ENCODE measurements at regions of chr10 and their contacts with region 1.

Region 1: GRCh38 chr10:52752801-52753445 is 19.7 kb downstream of the MBL2 start:
- DNase-seq: no peak
- H3K4me3 ChIP-seq: no peak overlapping the region
- H3K27ac ChIP-seq: no peak overlapping the region
- H3K4me1 ChIP-seq: no peaks in the 10 kb centered on the region
- H3K27me3 ChIP-seq: no peaks in the 10 kb centered on the region
- CTCF ChIP-seq: no peak
- EP300 ChIP-seq: no peak
- POLR2A ChIP-seq: no peak

Region 2: GRCh38 chr10:52779541-52780390 is 26.8 kb after region 1 on chr10:
- intact Hi-C with region 1: no loop called
- DNase-seq: peak in 2 of 5 donors; percentile 23 to 24
- H3K4me3 ChIP-seq: no peak overlapping the region
- H3K27ac ChIP-seq: no peak overlapping the region
- H3K4me1 ChIP-seq: no peaks in the 10 kb centered on the region
- H3K27me3 ChIP-seq: no peaks in the 10 kb centered on the region
- CTCF ChIP-seq: no peak
- EP300 ChIP-seq: no peak
- POLR2A ChIP-seq: no peak

Region 3: DNA sequence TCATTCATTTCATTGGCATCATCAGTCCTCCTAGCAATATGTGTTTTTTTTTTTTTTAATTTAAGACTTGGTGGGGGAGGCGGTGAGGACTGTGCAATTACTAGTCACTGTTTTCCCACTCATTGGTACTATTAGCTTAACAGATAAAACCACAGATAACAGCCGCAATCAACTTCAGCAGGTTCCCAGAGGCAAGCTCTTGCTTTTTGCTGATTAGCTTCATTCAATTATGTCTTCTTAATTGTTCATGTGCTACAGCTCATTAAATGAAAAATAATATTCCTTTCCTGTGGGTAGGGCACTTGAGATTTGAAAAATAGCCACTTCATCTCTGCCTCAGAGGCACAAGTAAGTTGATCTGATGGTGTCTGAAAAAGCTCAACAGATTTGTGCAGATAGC is 1832.6 kb after region 1 on chr10:
- intact Hi-C with region 1: loop called in 1 of 4 experiments (anchors 5 kb)
- DNase-seq: no peak
- H3K4me3 ChIP-seq: no peak overlapping the region
- H3K27ac ChIP-seq: no peak overlapping the region
- H3K4me1 ChIP-seq: no peaks in the 10 kb centered on the region
- H3K27me3 ChIP-seq: no peaks in the 10 kb centered on the region
- CTCF ChIP-seq: no peak
- EP300 ChIP-seq: no peak
- POLR2A ChIP-seq: no peak